CD14-positive monocyte (primary cell): ENCODE measurements at regions of chr4 and their contacts with region 1.

Region 1: GRCh38 chr4:10237131-10237530 is 120.5 kb upstream of the WDR1 start:
- DNase-seq: no peak
- H3K4me3 ChIP-seq: no peak overlapping the region
- H3K4me3 Mint-ChIP-seq: no peak overlapping the region
- H3K27ac ChIP-seq: no peak overlapping the region
- H3K27ac Mint-ChIP-seq: no peak overlapping the region
- H3K4me1 ChIP-seq: no peaks in the 10 kb centered on the region
- H3K4me1 Mint-ChIP-seq: no peaks in the 10 kb centered on the region
- H3K27me3 ChIP-seq: peaks cover 7 to 8% of the 10 kb centered on the region in 2 donors
- H3K27me3 Mint-ChIP-seq: peaks cover 3 to 8% (median 5%) of the 10 kb centered on the region in 3 donors
- CTCF ChIP-seq: no peak

Region 2: DNA sequence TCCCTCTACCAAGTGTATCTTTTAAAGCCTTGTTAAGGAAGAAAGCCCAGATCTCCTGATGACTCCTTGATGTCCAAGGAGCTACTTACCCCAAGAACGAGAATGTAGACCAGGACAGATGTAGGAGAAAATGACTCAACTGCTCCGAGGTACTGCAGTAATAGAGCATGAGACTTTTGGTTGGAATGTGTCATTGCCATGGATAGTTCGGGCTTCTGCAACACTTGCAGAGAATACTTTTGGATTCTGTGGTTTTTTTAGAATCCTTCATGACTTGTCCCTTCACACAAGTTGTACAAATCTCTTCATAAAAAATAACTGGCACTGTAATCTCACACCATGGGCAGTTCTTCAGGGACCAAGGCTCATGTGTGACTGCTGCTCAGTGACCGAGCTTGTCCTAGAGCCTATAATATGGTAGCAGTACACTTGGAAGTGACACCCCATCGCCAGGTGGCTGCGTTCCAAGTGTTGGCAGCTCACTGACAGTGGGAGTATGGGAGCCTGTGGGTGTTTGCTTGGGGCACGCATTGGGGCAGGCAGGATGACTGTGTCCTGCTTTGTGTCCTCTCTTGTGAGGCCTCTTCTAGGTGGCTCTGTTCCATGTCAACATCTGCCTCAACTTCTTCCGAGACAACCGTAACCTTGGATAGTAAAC is 32.6 kb before region 1 on chr4:
- intact Hi-C with region 1: loop called in 1 of 2 experiments (anchors 1 kb)
- DNase-seq: no peak
- H3K4me3 ChIP-seq: no peak overlapping the region
- H3K4me3 Mint-ChIP-seq: no peak overlapping the region
- H3K27ac ChIP-seq: no peak overlapping the region
- H3K27ac Mint-ChIP-seq: no peak overlapping the region
- H3K4me1 ChIP-seq: no peaks in the 10 kb centered on the region
- H3K4me1 Mint-ChIP-seq: no peaks in the 10 kb centered on the region
- H3K27me3 ChIP-seq: no peaks in the 10 kb centered on the region
- H3K27me3 Mint-ChIP-seq: peaks cover 2 to 6% (median 2%) of the 10 kb centered on the region in 3 donors
- CTCF ChIP-seq: no peak

Region 3: DNA sequence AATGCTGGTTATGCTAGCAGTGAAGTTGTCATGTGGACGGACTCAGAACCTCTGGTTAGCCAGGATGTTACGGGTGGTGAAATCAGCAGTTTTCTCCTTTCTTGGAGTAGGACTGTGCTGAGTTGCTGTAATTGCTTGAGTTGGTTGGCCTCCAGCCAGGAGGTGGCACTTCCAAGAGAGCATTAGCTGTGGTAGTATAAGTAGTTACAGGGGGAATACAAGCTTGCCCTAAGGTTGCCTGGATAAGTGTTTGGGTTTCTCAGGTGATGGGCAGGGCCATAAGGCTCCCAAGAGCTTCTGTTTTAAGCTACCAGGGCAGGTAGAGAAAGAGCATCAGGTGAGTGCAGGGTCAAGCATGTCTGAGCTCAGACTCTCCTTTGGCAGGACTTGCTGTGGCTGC is 117.1 kb after region 1 on chr4:
- intact Hi-C with region 1: no loop called
- DNase-seq: no peak
- H3K4me3 ChIP-seq: no peak overlapping the region
- H3K4me3 Mint-ChIP-seq: no peak overlapping the region
- H3K27ac ChIP-seq: no peak overlapping the region
- H3K27ac Mint-ChIP-seq: no peak overlapping the region
- H3K4me1 ChIP-seq: no peaks in the 10 kb centered on the region
- H3K4me1 Mint-ChIP-seq: no peaks in the 10 kb centered on the region
- H3K27me3 ChIP-seq: peaks cover 0 to 2% of the 10 kb centered on the region in 2 donors
- H3K27me3 Mint-ChIP-seq: peaks cover 2 to 10% (median 3%) of the 10 kb centered on the region in 3 donors
- CTCF ChIP-seq: no peak